Left colon (tissue), 2 donors: ENCODE measurements at regions of chr2 and their contacts with region 1.

Region 1: DNA sequence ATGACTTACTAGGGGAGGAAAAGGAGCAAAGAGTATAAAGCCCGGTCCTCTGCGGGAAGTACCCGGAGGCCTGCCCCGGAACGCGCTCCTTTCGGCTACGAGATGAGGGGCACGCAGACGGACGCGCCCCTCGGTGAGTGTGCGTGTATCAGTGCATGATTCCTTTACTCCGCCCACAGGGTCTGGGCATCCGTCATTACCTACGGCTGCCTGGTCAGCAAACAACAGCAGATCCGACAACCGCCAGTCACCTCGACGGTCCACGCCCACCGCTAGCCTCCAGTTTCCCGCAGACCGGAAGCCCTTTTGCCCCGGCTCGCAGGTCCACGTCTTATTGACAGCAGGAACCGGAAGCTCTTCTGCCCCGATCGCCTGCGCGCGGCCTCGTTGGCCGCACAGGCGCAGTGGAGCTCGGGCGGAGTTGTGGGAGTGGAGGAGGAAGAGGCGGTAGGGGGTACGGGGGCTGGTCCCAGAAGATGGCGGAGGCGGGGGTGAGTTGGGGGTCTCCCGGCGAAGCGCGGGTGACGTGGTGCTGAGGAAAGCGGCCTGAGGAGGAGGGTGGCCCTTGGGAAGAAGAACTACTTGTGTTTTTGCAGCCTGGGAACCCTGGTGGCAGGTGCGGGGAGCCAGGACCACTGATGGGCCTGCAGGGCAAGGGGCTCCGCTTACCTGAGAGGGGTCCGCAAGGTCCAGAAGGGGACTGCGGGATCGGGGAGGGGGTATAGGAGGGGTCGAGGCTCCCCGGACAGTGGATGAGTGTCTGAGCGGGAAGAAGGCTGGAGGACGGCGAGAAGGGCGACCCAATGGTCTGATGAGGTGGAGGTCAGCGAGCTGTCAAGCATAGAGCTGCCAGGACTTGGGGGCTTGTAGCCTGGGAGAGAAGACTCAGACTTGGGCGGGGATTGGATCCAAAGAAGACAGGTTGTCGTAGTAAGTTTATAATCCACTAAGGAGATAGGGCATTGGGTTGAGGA is at the start of gene INSIG2:
- DNase-seq: peak; percentile 96 to 98
- ATAC-seq: peak; percentile 96
- total RNA-seq, gene INSIG2: 12.7 to 20.6 TPM

Region 2: GRCh38 chr2:117814417-117815264 is 273.7 kb before region 1 on chr2 and contains the start of gene DDX18:
- intact Hi-C with region 1: loop called in 1 of 2 experiments (anchors 10 kb)
- DNase-seq: peak; percentile 97 to 98
- ATAC-seq: peak; percentile 100
- total RNA-seq, gene DDX18: 35.5 to 37.0 TPM

Region 3: GRCh38 chr2:118197011-118197675 is 108.8 kb after region 1 on chr2:
- intact Hi-C with region 1: loop called in 1 of 2 experiments (anchors 10 kb)
- DNase-seq: no peak
- ATAC-seq: no peak

Region 4: DNA sequence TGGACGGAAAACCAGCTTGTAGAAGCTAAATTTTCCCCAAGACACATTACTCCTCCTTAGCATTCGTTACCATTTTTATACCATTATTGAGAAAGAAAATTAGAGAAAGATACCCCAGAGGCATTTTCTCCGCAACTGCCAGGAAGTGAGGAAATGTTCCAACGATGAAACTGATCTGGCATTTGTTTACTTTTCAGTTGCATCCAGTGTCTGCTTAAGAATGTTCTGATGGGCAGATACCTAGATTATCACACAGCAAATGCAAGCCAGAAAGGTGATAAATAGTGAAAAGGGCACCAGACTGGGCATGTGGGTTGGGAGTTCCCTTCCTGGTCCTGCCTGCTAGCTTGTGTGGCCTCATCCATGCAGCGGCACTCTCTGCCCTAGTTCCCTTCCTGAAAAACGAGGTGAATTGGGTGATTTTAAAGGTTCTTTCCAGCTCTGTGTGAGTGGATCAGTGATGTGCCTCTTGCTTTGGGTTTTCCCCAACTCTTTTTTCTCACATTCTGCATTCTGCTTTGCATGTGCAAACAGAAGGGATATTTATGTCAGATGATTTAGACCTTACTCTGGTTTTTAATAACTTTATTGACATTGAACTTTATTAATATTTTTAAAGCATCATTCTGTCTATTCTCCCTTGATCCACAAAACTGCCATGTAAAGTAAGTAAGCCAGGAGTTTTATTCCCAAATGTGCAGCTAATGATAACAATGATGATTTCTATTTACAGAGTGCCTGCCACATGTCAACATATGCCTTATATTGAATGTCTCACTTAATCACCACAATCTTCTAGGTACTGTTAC is 139.6 kb after region 1 on chr2:
- intact Hi-C with region 1: no loop called
- DNase-seq: no peak
- ATAC-seq: no peak